ENCODE measurements at regions of chr16 and their contacts with region 1.

Region 1: GRCh38 chr16:50814541-50814940 is 72.7 kb downstream of the CYLD start:
- DNase-seq: no peak
- H3K4me3 ChIP-seq: no peak overlapping the region
- H3K27ac ChIP-seq: no peak overlapping the region
- H3K4me1 ChIP-seq: peaks cover 0 to 3% (median 0%) of the 10 kb centered on the region in 4 experiments
- H3K27me3 ChIP-seq: no peaks in the 10 kb centered on the region

Region 2: GRCh38 chr16:50789757-50790156 is 24.8 kb before region 1 on chr16:
- CTCF ChIA-PET with region 1: no interaction called
- POLR2A ChIA-PET with region 1: no interaction called
- DNase-seq: no peak
- H3K4me3 ChIP-seq: no peak overlapping the region
- H3K27ac ChIP-seq: no peak overlapping the region
- H3K4me1 ChIP-seq: no peaks in the 10 kb centered on the region
- H3K27me3 ChIP-seq: no peaks in the 10 kb centered on the region

Region 3: DNA sequence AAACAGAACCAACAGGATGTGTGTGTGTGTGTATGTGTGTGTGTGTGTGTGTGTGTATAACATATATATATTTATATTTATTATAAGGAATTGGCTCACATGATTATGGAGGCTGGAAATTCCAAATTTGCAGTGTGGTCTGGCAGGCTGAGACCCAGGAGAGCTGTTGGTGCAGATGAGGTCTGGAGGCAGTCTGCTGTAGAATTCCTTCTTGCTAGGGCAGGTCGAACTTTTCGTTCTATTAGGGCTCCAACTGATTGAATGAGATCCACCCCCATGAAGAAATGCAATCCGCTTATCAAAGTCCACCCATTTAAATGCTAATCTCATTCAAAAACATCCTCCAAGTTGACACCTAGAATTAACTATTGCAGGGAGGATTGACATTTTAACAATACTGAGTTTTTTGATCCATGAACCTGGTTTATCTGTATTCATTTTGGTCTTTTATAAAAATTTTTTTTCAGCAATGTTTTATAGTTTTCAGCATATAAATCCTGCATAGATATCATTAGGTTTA is 12.3 kb after region 1 on chr16:
- CTCF ChIA-PET with region 1: interaction called, 20 read pairs
- POLR2A ChIA-PET with region 1: no interaction called
- DNase-seq: no peak
- H3K4me3 ChIP-seq: no peak overlapping the region
- H3K27ac ChIP-seq: no peak overlapping the region
- H3K4me1 ChIP-seq: peaks cover 0 to 5% (median 0%) of the 10 kb centered on the region in 4 experiments
- H3K27me3 ChIP-seq: no peaks in the 10 kb centered on the region